Left ventricle myocardium superior (tissue), 1 donor: ENCODE measurements at regions of chr7 and their contacts with region 1.

Region 1: GRCh38 chr7:98021588-98022351 is 31.8 kb upstream of the OCM2 start:
- DNase-seq: peak; percentile 87
- ATAC-seq: peak; percentile 85

Region 2: GRCh38 chr7:98178347-98178746 is 156.6 kb after region 1 on chr7:
- intact Hi-C with region 1: loop called (anchors 5 kb)
- DNase-seq: peak; percentile 87
- ATAC-seq: peak; percentile 93